H1 (cell line): ENCODE measurements at regions of chr1 and their contacts with region 1.

Region 1: DNA sequence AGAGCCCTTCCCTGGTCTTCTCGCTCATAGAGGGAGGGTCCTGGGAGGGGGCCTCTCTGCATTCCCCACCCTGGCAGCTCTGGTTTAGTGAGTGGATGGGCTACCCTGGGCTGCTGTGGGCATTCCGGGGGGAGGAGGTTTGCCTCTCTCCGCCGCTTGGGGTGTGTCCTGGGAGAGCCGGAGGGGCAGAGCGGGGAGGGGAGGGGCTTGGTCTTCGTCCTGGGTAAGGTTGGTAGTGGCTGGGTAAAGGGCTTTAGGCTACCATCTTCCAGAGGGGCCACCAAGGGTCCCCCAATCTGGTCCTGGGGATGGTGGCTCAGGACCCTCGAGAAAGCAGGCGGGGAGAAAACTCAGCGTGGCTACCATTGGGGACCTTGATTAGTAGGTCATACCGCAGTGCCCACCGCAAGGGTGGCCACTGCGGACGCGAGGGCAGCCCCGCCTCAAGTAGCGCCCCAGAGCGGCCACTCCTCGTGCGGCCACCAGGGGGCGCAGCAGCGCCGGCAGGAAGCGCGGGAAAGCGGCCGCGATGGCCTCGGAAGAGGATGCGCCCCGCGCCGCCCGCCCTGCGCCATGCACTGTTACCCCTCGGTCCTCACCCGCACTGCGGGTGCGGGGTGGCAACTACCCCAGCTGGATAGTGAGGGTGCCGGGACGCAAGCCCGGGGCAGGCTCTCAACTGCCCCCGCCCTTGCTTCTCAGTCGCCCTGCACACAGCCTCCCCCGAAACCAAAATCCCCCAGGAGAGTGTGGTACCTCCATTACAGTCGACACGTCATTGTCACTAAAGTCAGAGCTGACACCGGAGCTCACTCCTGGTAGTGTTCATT is 44.1 kb upstream of the SLC25A33 start:
- DNase-seq: peak; percentile 38 to 91
- H3K4me3 ChIP-seq: peak overlapping the region in 3 of 4 experiments; percentile 28 to 55 (median 43); a peak in 6 of 8 replicates
- H3K27ac ChIP-seq: no peak overlapping the region
- H3K4me1 ChIP-seq: no peaks in the 10 kb centered on the region
- H3K27me3 ChIP-seq: peaks cover 3 to 16% (median 11%) of the 10 kb centered on the region in 4 experiments
- CTCF ChIP-seq: peak; percentile 88 to 98 (median 91)
- EP300 ChIP-seq: no peak
- POLR2A ChIP-seq: peak in 1 of 2 experiments; percentile 53; a peak in 2 of 3 replicates
- RAD21 ChIP-seq: peak; percentile 68 to 80

Region 2: DNA sequence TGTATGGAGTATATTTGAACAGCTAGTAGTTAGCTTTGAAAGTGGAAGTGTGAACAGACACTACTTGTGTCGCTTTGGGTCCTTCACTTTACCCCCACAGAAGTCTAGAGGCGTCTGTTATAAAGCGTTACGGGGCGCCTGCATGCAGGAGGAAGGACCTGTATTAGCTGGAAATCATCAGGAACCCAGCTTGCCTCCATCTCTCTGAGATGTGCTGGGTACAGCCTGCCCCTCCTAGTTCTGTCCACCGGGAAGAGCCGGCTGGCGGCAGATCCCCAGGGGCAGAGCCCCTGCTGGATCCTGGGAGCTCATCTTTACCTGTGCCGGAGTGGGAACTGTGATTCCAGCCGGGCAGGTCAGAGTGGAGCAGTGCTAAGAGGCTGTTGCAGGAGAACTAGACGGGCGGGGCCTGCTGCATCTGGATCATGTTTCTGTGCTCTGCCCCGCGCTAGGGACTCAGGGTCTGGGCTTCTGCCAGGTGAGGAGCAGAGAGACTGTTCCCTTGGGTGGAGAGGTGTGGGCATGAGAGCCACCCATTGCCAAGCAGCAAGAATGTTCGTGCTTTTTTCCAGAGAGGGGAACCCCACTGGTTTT is 224.8 kb before region 1 on chr1:
- CTCF ChIA-PET with region 1: interaction called, 82 read pairs
- POLR2A ChIA-PET with region 1: no interaction called
- DNase-seq: peak in 1 of 2 experiments; percentile 53
- H3K4me3 ChIP-seq: no peak overlapping the region
- H3K27ac ChIP-seq: no peak overlapping the region
- H3K4me1 ChIP-seq: peaks cover 0 to 4% (median 1%) of the 10 kb centered on the region in 4 experiments; a peak in 5 of 7 replicates
- H3K27me3 ChIP-seq: no peaks in the 10 kb centered on the region; a peak in 1 of 7 replicates
- CTCF ChIP-seq: no peak
- EP300 ChIP-seq: no peak
- POLR2A ChIP-seq: no peak
- RAD21 ChIP-seq: no peak

Region 3: GRCh38 chr1:9321480-9321849 is 173.7 kb before region 1 on chr1:
- CTCF ChIA-PET with region 1: interaction called, 11 read pairs
- POLR2A ChIA-PET with region 1: no interaction called
- DNase-seq: no peak
- H3K4me3 ChIP-seq: no peak overlapping the region
- H3K27ac ChIP-seq: no peak overlapping the region
- H3K4me1 ChIP-seq: peaks cover 12 to 37% (median 26%) of the 10 kb centered on the region in 4 experiments
- H3K27me3 ChIP-seq: peaks cover 0 to 2% (median 0%) of the 10 kb centered on the region in 4 experiments; a peak in 1 of 7 replicates
- CTCF ChIP-seq: no peak
- EP300 ChIP-seq: no peak
- POLR2A ChIP-seq: no peak
- RAD21 ChIP-seq: no peak

Region 4: DNA sequence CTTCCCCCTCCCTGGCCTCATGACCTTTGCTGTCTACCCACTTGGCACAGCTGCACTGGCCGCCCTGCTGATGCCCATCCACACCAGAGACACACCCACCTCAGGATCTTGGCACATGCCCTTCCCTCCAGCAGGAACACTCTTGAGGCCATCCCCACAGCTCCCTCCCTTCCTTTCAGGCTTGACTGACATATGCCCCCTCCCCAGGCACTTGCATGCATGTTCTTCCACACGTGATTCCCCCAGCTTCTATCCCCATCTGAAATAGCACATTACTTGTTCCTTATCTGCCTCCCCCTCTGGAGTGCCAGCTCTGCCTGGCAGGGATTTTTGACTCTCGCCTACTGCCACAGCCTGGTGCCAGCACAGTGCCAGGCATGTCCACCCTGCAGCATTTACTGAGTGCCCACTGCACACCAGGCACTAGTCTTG is 54.4 kb before region 1 on chr1:
- CTCF ChIA-PET with region 1: no interaction called
- POLR2A ChIA-PET with region 1: no interaction called
- DNase-seq: no peak
- H3K4me3 ChIP-seq: no peak overlapping the region
- H3K27ac ChIP-seq: no peak overlapping the region
- H3K4me1 ChIP-seq: peaks cover 0 to 8% (median 2%) of the 10 kb centered on the region in 4 experiments; a peak in 3 of 7 replicates
- H3K27me3 ChIP-seq: no peaks in the 10 kb centered on the region
- CTCF ChIP-seq: no peak
- EP300 ChIP-seq: no peak
- POLR2A ChIP-seq: no peak
- RAD21 ChIP-seq: no peak

Region 5: GRCh38 chr1:9466780-9467758 is 28.1 kb before region 1 on chr1:
- CTCF ChIA-PET with region 1: interaction called, 60 read pairs
- POLR2A ChIA-PET with region 1: no interaction called
- DNase-seq: no peak
- H3K4me3 ChIP-seq: no peak overlapping the region
- H3K27ac ChIP-seq: no peak overlapping the region
- H3K4me1 ChIP-seq: no peaks in the 10 kb centered on the region
- H3K27me3 ChIP-seq: no peaks in the 10 kb centered on the region
- CTCF ChIP-seq: no peak
- EP300 ChIP-seq: no peak
- POLR2A ChIP-seq: no peak
- RAD21 ChIP-seq: no peak

Region 6: DNA sequence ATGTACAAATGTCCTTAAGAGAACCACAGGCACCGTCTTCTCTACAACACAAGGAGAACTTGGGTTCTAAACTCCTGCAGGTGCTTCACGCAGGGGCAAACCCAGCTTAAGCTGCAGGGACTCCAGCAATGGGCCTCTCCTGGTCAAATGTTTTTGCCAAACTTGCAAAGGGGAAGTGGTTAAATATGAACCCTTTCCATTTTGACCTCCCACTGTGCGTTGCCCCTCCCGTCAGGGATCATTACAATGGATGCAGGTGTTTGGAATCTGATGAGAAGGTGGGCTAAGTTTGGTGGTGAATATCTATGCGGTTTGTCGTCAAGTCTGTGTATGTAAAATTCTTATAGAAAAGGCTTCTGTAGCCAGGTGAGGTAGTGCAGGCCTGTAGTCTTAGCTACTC is 15.0 kb after region 1 on chr1:
- CTCF ChIA-PET with region 1: interaction called, 14 read pairs
- POLR2A ChIA-PET with region 1: no interaction called
- DNase-seq: no peak
- H3K4me3 ChIP-seq: no peak overlapping the region
- H3K27ac ChIP-seq: no peak overlapping the region
- H3K4me1 ChIP-seq: peaks cover 0 to 4% (median 0%) of the 10 kb centered on the region in 4 experiments; a peak in 1 of 7 replicates
- H3K27me3 ChIP-seq: no peaks in the 10 kb centered on the region
- CTCF ChIP-seq: no peak
- EP300 ChIP-seq: no peak
- POLR2A ChIP-seq: no peak
- RAD21 ChIP-seq: no peak

Region 7: GRCh38 chr1:9615316-9616063 is 120.3 kb after region 1 on chr1:
- CTCF ChIA-PET with region 1: interaction called, 11 read pairs
- POLR2A ChIA-PET with region 1: no interaction called
- DNase-seq: peak; percentile 59 to 86
- H3K4me3 ChIP-seq: no peak overlapping the region
- H3K27ac ChIP-seq: no peak overlapping the region
- H3K4me1 ChIP-seq: no peaks in the 10 kb centered on the region; a peak in 1 of 7 replicates
- H3K27me3 ChIP-seq: no peaks in the 10 kb centered on the region
- CTCF ChIP-seq: peak; percentile 94 to 96 (median 95)
- EP300 ChIP-seq: no peak
- POLR2A ChIP-seq: no peak
- RAD21 ChIP-seq: peak; percentile 68 to 72